Body of pancreas (tissue), 4 donors: ENCODE measurements at regions of chr1 and their contacts with region 1.

Region 1: GRCh38 chr1:157575744-157576143 is 22.1 kb downstream of the FCRL4 start:
- DNase-seq: no peak
- ATAC-seq: no peak
- H3K4me3 ChIP-seq: no peak overlapping the region
- H3K27ac ChIP-seq: no peak overlapping the region
- H3K4me1 ChIP-seq: no peaks in the 10 kb centered on the region
- H3K27me3 ChIP-seq: no peaks in the 10 kb centered on the region
- CTCF ChIP-seq: no peak
- POLR2A ChIP-seq: no peak

Region 2: DNA sequence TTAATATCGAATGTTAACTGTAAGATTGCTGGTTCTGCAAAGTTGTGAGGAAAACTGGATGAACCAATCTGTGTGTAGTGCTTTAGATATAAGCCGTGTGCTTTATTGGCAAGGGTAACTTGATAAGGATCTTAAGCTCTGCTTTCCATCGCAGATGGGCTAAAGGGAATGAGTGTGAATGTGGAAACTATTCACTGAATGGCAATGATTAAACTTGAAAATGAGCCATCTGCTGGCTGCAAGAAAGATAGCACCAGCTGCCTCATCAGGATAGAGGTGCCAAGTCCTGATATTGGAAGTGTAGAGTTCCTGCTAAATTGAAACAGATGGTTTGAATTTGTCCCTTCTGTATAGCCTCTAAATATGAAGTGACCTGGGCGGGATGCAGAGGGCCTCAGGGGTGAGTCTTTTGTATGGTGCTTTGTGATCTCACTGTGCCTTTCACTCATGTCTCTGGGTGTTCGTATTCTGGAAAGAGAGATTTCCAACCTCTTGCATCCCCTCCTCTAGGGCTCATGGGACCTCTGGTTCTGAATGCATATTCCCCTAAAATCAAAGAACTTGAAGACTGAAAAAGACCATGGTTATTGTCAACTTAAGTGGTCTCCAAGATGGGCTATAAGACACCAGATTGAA is 115.7 kb after region 1 on chr1:
- intact Hi-C with region 1: loop called (anchors 10 kb)
- DNase-seq: peak in 1 of 4 donors; percentile 21
- ATAC-seq: peak; percentile 62
- H3K4me3 ChIP-seq: no peak overlapping the region
- H3K27ac ChIP-seq: no peak overlapping the region
- H3K4me1 ChIP-seq: no peaks in the 10 kb centered on the region
- H3K27me3 ChIP-seq: no peaks in the 10 kb centered on the region
- CTCF ChIP-seq: peak; percentile 22 to 59 (median 54)
- POLR2A ChIP-seq: no peak